ENCODE measurements at regions of chr9 and their contacts with region 1.

Region 1: GRCh38 chr9:18255158-18255629 is 218.8 kb upstream of the ADAMTSL1 start:
- DNase-seq: peak; percentile 74
- H3K4me3 Mint-ChIP-seq: no peak overlapping the region
- H3K27ac Mint-ChIP-seq: no peak overlapping the region
- H3K4me1 Mint-ChIP-seq: no peaks in the 10 kb centered on the region
- H3K27me3 Mint-ChIP-seq: peaks cover 7% of the 10 kb centered on the region

Region 2: DNA sequence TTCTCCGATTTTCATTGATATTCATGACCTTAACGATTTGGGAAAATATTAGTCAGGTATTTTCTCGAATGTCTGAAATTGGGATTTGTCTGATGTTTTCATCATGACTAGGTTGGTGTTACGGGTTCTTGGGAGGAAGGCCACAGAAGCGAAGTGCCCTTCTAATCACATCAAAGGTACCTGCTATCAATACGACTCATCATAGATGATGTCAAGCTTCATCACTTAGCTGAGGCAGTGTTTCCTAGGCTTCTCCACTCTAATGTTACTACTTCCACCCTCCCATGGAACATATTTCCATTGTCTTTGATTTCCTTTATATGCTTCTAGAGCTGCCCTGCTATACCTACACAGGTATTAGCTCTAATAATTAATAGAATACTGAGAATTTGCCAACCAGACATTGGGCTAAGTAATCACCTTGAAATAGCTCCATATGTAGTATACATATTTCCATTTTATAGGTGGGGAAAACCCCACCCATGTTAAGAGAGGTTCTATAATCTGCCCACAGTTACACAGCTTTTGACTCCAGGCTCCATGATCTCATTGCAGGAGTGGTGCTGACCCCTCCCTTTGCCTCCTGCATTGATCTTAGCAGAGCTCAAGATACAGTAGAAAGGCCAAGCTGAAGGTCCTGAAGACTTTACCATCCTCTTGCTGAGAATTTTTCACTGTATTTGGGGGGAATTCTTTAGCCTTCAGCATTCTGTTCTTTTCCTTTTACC is 19.8 kb before region 1 on chr9:
- CTCF ChIA-PET with region 1: interaction called, 10 read pairs
- POLR2A ChIA-PET with region 1: no interaction called
- DNase-seq: no peak
- H3K4me3 Mint-ChIP-seq: no peak overlapping the region
- H3K27ac Mint-ChIP-seq: no peak overlapping the region
- H3K4me1 Mint-ChIP-seq: no peaks in the 10 kb centered on the region
- H3K27me3 Mint-ChIP-seq: peaks cover 2% of the 10 kb centered on the region

Region 3: GRCh38 chr9:18442629-18443491 is 187.7 kb after region 1 on chr9:
- CTCF ChIA-PET with region 1: interaction called, 23 read pairs
- POLR2A ChIA-PET with region 1: no interaction called
- DNase-seq: peak; percentile 54
- H3K4me3 Mint-ChIP-seq: no peak overlapping the region
- H3K27ac Mint-ChIP-seq: no peak overlapping the region
- H3K4me1 Mint-ChIP-seq: no peaks in the 10 kb centered on the region
- H3K27me3 Mint-ChIP-seq: peaks cover 10% of the 10 kb centered on the region

Region 4: DNA sequence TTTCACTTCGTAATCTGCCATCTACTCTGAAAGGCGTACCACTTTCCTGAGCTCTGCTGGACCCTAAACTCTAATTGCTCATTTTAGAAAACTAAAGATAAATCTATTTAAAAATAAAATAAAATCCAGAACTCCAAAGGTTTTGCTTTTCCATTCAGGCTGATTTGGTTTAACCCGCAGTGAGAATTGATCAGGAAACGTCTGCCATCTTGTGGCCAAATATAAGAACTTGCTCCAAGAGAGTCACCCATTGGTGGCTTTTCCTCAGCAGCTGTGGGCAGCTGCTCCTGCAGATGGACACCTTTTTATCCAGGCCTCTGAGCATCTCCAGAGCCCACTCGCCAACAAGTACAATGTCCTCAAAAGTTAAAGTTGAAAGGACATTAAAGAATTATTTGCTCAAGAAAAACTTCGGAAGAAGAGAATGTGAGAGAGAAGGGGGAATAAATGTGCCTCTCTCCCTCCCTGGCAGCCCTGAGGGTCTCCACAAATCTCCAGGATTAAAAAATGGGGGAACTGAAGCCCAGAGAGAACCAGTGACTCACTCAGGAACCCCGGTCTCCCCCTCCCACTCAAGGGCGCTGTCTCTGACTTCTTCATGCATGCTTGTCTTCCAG is 773.7 kb after region 1 on chr9:
- CTCF ChIA-PET with region 1: interaction called, 23 read pairs
- POLR2A ChIA-PET with region 1: no interaction called
- DNase-seq: peak; percentile 35
- H3K4me3 Mint-ChIP-seq: no peak overlapping the region
- H3K27ac Mint-ChIP-seq: no peak overlapping the region
- H3K4me1 Mint-ChIP-seq: peaks cover 19% of the 10 kb centered on the region
- H3K27me3 Mint-ChIP-seq: peaks cover 14% of the 10 kb centered on the region